ENCODE measurements at regions of chr6 and their contacts with region 1.

Region 1: DNA sequence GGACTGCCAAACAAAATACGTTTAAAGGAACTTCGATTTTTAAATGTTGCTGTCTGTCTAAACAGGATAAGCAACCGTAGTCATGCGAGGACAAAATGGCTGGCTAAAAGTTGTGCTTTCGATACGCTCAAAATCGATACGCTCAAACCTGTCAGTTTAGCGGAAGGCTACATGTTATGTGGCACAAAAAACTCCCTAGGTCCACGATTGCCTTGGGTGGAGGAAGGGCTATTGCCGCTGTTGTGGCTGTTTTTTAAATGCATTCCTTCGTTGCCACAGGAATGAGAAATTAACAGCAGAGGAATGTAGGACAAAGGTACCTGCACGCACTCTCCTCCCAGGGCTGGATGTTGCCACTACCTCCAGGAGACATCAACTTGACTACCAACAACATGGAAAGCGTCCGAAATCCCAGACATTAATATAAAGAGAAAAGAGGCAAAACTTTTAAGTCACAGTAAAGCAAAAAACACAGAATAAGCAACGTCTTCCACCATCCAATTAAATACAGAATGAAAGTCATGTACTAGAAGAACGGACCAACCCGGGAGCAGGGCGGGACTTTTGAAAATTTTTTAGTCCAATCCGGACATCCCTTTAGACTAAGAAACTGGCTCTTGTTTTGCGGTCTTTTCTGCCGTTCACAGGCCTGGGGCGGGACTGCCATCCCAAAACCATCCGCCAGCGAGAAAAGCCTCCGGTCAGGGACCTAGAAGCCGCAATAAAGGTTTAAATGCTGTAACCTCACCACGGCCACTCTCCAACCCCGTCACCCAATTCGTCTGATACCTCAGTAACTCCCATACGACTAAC is 32.2 kb upstream of the HFE start:
- DNase-seq: peak; percentile 95
- ATAC-seq: peak; percentile 72
- H3K4me3 Mint-ChIP-seq: peak overlapping the region; percentile 87
- H3K27ac Mint-ChIP-seq: peak overlapping the region; percentile 100
- H3K4me1 Mint-ChIP-seq: peaks cover 36% of the 10 kb centered on the region
- H3K27me3 Mint-ChIP-seq: no peaks in the 10 kb centered on the region

Region 2: DNA sequence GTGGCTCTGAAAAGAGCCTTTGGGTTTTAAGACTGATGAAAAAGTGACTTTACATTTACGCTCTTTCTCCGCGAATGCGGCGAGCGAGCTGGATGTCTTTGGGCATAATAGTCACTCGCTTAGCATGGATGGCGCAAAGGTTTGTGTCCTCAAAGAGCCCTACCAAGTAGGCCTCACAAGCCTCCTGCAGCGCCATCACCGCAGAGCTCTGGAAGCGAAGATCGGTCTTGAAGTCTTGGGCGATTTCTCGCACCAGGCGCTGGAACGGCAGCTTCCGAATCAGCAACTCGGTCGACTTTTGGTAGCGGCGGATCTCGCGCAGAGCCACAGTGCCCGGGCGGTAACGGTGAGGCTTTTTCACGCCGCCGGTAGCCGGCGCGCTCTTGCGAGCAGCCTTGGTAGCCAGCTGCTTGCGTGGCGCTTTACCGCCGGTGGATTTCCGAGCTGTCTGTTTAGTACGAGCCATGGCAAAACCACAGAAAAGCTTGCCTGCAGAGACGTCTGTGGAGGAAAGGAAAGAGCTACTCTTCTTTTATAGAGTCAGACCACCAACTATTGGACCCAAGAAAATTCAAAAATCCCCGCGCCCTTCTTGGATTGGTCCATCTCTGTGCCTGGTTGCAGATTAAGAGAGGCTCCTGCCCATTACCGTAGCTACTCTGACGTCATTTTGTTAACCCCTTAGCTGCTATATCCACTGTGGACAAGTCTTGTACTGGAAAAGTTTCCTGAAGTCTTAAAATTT is 23.3 kb before region 1 on chr6:
- CTCF ChIA-PET with region 1: interaction called, 10 read pairs
- POLR2A ChIA-PET with region 1: interaction called, 1,951 read pairs
- DNase-seq: peak; percentile 97
- ATAC-seq: peak; percentile 66
- H3K4me3 Mint-ChIP-seq: peak overlapping the region; percentile 93
- H3K27ac Mint-ChIP-seq: peak overlapping the region; percentile 99
- H3K4me1 Mint-ChIP-seq: peaks cover 68% of the 10 kb centered on the region
- H3K27me3 Mint-ChIP-seq: peaks cover 3% of the 10 kb centered on the region

Region 3: DNA sequence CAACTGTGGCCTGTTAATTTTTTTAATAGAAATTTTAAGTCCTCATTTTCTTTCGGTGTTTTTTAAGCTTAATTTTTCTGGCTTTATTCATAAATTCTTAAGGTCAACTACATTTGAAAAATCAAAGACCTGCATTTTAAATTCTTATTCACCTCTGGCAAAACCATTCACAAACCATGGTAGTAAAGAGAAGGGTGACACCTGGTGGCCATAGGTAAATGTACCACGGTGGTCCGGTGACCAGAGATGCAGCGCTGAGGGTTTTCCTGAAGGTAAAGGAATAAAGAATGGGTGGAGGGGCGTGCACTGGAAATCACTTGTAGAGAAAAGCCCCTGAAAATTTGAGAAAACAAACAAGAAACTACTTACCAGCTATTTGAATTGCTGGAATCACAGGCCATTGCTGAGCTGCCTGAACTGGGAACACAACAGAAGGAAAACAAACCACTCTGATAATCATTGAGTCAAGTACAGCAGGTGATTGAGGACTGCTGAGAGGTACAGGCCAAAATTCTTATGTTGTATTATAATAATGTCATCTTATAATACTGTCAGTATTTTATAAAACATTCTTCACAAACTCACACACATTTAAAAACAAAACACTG is 42.3 kb after region 1 on chr6:
- CTCF ChIA-PET with region 1: interaction called, 741 read pairs
- POLR2A ChIA-PET with region 1: interaction called, 118 read pairs
- DNase-seq: peak; percentile 78
- ATAC-seq: peak; percentile 85
- H3K4me3 Mint-ChIP-seq: no peak overlapping the region
- H3K27ac Mint-ChIP-seq: no peak overlapping the region
- H3K4me1 Mint-ChIP-seq: peaks cover 16% of the 10 kb centered on the region
- H3K27me3 Mint-ChIP-seq: peaks cover 9% of the 10 kb centered on the region

Region 4: DNA sequence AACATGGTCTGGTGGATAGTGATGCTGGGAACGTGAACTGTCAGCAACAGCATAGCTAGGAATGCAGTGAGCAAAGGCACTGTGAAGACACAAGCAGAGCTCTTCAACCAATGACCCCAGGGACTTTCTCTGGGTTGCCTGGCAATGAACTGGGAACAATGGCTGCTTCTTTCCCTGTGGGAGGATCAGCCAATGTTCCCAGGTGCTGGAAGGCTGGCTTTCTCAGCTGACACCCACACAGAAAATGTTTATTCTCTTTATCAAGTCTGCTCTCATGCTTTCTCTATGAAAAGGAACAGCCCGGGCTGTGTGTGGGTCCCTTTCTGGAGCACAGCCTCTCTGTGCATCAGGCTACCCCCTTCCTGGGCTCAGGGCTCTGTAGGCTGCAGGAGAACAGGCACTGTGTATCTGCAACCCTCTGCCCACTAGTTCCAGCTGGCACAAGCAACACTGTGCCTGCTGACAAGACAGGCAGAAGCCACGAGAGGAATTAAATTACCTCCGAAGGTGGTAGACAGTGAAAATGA is 86.4 kb after region 1 on chr6:
- CTCF ChIA-PET with region 1: no interaction called
- POLR2A ChIA-PET with region 1: no interaction called
- DNase-seq: no peak
- ATAC-seq: no peak
- H3K4me3 Mint-ChIP-seq: no peak overlapping the region
- H3K27ac Mint-ChIP-seq: no peak overlapping the region
- H3K4me1 Mint-ChIP-seq: peaks cover 5% of the 10 kb centered on the region
- H3K27me3 Mint-ChIP-seq: no peaks in the 10 kb centered on the region

Region 5: GRCh38 chr6:26183581-26184366 is 128.7 kb after region 1 on chr6:
- CTCF ChIA-PET with region 1: no interaction called
- POLR2A ChIA-PET with region 1: interaction called, 23 read pairs
- DNase-seq: peak; percentile 80
- ATAC-seq: peak; percentile 80
- H3K4me3 Mint-ChIP-seq: peak overlapping the region; percentile 83
- H3K27ac Mint-ChIP-seq: peak overlapping the region; percentile 97
- H3K4me1 Mint-ChIP-seq: peaks cover 79% of the 10 kb centered on the region
- H3K27me3 Mint-ChIP-seq: no peaks in the 10 kb centered on the region

Region 6: DNA sequence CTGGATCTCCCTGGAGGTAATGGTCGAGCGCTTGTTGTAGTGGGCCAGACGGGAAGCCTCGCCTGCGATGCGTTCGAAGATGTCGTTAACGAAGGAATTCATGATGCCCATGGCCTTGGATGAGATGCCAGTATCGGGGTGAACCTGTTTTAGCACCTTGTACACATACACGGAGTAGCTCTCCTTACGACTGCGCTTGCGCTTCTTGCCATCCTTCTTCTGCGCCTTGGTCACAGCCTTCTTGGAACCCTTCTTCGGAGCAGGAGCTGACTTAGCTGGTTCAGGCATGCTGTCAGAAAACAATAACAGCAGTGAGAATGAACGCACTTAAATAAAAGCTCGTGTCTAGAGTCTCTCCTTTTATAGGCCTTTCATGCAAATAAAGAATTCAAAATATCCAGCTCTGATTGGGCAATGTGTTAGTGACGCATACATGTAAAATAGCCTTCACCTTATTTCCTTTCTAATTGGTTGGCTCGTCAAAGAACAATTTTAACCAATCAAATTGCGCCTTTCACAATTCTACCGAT is 161.4 kb after region 1 on chr6:
- CTCF ChIA-PET with region 1: no interaction called
- POLR2A ChIA-PET with region 1: interaction called, 44 read pairs
- DNase-seq: peak; percentile 93
- ATAC-seq: peak; percentile 67
- H3K4me3 Mint-ChIP-seq: no peak overlapping the region
- H3K27ac Mint-ChIP-seq: no peak overlapping the region
- H3K4me1 Mint-ChIP-seq: peaks cover 43% of the 10 kb centered on the region
- H3K27me3 Mint-ChIP-seq: no peaks in the 10 kb centered on the region

Region 7: GRCh38 chr6:27838058-27838944 is 1783.2 kb after region 1 on chr6:
- CTCF ChIA-PET with region 1: no interaction called
- POLR2A ChIA-PET with region 1: interaction called, 10 read pairs
- DNase-seq: peak; percentile 92
- ATAC-seq: peak; percentile 78
- H3K4me3 Mint-ChIP-seq: no peak overlapping the region
- H3K27ac Mint-ChIP-seq: no peak overlapping the region
- H3K4me1 Mint-ChIP-seq: peaks cover 33% of the 10 kb centered on the region
- H3K27me3 Mint-ChIP-seq: no peaks in the 10 kb centered on the region